Spleen (tissue), 13 donors: ENCODE measurements at regions of chr10 and their contacts with region 1.

Region 1: GRCh38 chr10:97736902-97737769 is at the start of gene ZFYVE27:
- DNase-seq: peak; percentile 99
- H3K4me3 ChIP-seq: peak within 1 kb of the TSS; percentile 66 to 95 (median 84)
- H3K27ac ChIP-seq: peak within 1 kb of the TSS; percentile 85 to 98 (median 94)
- H3K4me1 ChIP-seq: peaks cover 10 to 54% (median 35%) of the 10 kb centered on the region in 6 donors
- H3K27me3 ChIP-seq: no peaks in the 10 kb centered on the region
- CTCF ChIP-seq: peak in 1 of 11 experiments; percentile 10
- POLR2A ChIP-seq: peak; percentile 53 to 89 (median 71)
- total RNA-seq, gene ZFYVE27: 29.2 to 42.2 (median 34.1) TPM

Region 2: GRCh38 chr10:97632949-97633884 is 103.9 kb before region 1 on chr10 and contains the start of gene MORN4:
- intact Hi-C with region 1: no loop called
- DNase-seq: peak; percentile 96
- H3K4me3 ChIP-seq: peak within 1 kb of the TSS; percentile 51 to 87 (median 75)
- H3K27ac ChIP-seq: peak within 1 kb of the TSS in 6 of 8 donors; percentile 36 to 74 (median 54)
- H3K4me1 ChIP-seq: peaks cover 0 to 23% (median 14%) of the 10 kb centered on the region in 6 donors
- H3K27me3 ChIP-seq: no peaks in the 10 kb centered on the region
- CTCF ChIP-seq: peak in 2 of 11 experiments; percentile 7 to 15
- POLR2A ChIP-seq: no peak
- total RNA-seq, gene MORN4: 1.6 to 5.0 (median 2.8) TPM

Region 3: DNA sequence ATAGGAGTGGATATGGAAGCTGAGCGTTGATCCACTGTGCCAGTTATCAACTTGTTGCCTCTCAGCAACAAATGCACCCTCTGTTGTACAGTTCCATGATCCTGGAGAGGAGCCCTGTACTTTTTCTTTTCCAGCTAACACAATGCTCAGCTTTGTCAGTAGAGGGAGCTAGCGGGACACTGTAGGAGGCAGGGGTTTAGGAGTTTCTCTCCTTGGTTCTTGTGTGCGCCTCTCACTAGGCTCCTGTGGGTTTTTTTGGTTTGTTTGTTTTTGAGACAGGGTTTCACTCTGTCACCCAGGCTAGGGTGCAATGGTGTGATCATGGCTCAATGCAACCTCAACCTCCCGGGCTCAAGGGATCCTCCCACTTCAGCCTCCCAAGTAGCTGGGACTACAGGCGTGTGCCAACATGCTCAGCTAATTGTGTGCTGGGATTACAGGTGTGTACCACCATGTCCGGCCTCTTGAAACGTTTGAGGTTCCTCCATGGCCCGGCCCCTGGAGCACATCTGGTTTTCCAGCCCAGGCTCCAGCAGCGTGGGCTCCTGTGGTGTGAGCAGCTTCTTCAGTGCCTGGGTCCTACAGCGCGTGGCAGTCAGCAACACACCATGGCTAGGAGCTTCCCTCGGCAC is 35.6 kb before region 1 on chr10:
- intact Hi-C with region 1: loop called (anchors 5 kb)
- DNase-seq: no peak
- H3K4me3 ChIP-seq: no peak overlapping the region
- H3K27ac ChIP-seq: no peak overlapping the region
- H3K4me1 ChIP-seq: peaks cover 0 to 9% (median 4%) of the 10 kb centered on the region in 6 donors
- H3K27me3 ChIP-seq: no peaks in the 10 kb centered on the region
- CTCF ChIP-seq: peak; percentile 43 to 79 (median 73)
- POLR2A ChIP-seq: no peak